Endothelial cell of umbilical vein (primary cell): ENCODE measurements at regions of chr2 and their contacts with region 1.

Region 1: DNA sequence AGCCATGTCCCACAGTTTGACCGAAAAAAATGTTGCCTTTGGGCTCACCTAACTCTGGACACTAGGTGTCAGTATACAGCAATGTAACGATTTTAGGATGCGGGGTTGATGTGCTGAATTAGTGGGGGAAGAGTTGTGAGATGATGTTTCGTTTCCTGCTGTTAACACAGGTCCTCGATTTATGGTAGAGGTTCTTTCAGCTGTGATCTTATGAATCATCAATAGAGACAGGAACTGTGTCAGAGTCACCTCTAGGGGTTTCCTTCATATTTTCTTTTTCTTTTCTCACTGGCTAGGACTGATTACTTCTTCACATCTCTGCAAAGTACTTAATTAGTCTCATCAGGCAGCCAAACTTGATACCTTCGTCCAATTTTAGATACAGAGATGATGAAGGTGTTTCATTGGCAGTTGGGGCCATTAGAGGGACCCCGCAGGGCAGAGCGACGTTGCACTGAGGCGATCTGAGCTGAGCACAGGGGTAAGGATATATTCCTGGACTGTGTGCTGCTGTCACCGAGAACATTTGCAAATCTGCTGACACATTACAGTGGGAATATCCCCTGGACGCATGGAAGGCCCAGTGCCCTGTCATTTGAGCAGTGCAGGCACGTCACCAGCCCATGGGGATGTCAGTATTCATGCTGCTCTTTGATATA is 10.2 kb upstream of the MMADHC start:
- DNase-seq: peak; percentile 87
- H3K4me3 ChIP-seq: peak overlapping the region in 1 of 3 experiments; percentile 30
- H3K27ac ChIP-seq: peak overlapping the region; percentile 81
- H3K4me1 ChIP-seq: peaks cover 7% of the 10 kb centered on the region
- H3K27me3 ChIP-seq: no peaks in the 10 kb centered on the region
- CTCF ChIP-seq: peak; percentile 60 to 91
- POLR2A ChIP-seq: no peak

Region 2: GRCh38 chr2:149271575-149271974 is 326.2 kb before region 1 on chr2:
- CTCF ChIA-PET with region 1: no interaction called
- POLR2A ChIA-PET with region 1: no interaction called
- dilution Hi-C with region 1: no loop called
- intact Hi-C with region 1: no loop called
- DNase-seq: no peak
- H3K4me3 ChIP-seq: no peak overlapping the region
- H3K27ac ChIP-seq: no peak overlapping the region
- H3K4me1 ChIP-seq: no peaks in the 10 kb centered on the region
- H3K27me3 ChIP-seq: no peaks in the 10 kb centered on the region
- CTCF ChIP-seq: no peak
- POLR2A ChIP-seq: no peak

Region 3: GRCh38 chr2:149715005-149715592 is 117.3 kb after region 1 on chr2:
- CTCF ChIA-PET with region 1: interaction called, 8 read pairs
- POLR2A ChIA-PET with region 1: no interaction called
- dilution Hi-C with region 1: no loop called
- intact Hi-C with region 1: loop called (anchors 1 kb)
- DNase-seq: peak; percentile 63
- H3K4me3 ChIP-seq: no peak overlapping the region
- H3K27ac ChIP-seq: no peak overlapping the region
- H3K4me1 ChIP-seq: no peaks in the 10 kb centered on the region
- H3K27me3 ChIP-seq: no peaks in the 10 kb centered on the region
- CTCF ChIP-seq: peak; percentile 71 to 76
- POLR2A ChIP-seq: no peak

Region 4: DNA sequence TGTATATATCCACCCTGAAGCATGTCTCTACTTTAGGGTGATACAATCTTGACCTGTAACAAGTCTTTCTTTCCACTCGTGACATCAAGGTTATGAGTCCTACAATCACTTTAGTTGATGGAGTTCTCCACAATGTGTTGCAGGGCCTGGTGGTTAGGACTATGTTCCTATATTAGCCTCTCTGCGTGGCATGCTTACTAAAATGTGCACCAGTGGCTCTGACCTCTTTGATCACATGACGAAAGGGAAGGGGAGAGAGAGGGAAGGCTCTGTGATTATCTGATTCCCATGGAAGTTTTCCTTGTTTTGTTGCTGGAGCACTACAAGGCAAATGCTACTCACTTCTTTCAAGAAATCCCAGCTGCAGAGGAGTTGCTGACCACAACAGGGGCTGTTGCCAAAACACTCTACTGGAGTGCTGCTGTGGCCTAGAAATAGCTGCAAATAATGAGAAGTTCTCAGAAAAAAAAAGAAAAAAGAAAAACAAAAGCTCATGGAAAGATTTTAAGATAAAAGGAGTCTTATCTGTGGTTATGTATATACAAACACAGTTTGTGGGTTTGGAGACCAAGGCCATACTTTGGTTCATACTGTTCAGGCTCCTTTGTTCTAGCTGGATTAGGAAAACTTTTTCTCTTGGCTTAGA is 262.6 kb after region 1 on chr2:
- CTCF ChIA-PET with region 1: interaction called, 3 read pairs
- POLR2A ChIA-PET with region 1: no interaction called
- dilution Hi-C with region 1: no loop called
- intact Hi-C with region 1: loop called (anchors 5 kb)
- DNase-seq: peak; percentile 75
- H3K4me3 ChIP-seq: no peak overlapping the region
- H3K27ac ChIP-seq: peak overlapping the region; percentile 11
- H3K4me1 ChIP-seq: peaks cover 36% of the 10 kb centered on the region
- H3K27me3 ChIP-seq: no peaks in the 10 kb centered on the region
- CTCF ChIP-seq: no peak
- POLR2A ChIP-seq: no peak

Region 5: GRCh38 chr2:150410809-150411208 is 813.0 kb after region 1 on chr2:
- CTCF ChIA-PET with region 1: no interaction called
- POLR2A ChIA-PET with region 1: no interaction called
- dilution Hi-C with region 1: no loop called
- intact Hi-C with region 1: loop called (anchors 2 kb)
- DNase-seq: peak; percentile 85
- H3K4me3 ChIP-seq: no peak overlapping the region
- H3K27ac ChIP-seq: peak overlapping the region; percentile 95
- H3K4me1 ChIP-seq: peaks cover 40% of the 10 kb centered on the region
- H3K27me3 ChIP-seq: no peaks in the 10 kb centered on the region
- CTCF ChIP-seq: no peak
- POLR2A ChIP-seq: peak; percentile 39

Region 6: GRCh38 chr2:150778828-150779227 is 1181.0 kb after region 1 on chr2:
- CTCF ChIA-PET with region 1: no interaction called
- POLR2A ChIA-PET with region 1: no interaction called
- dilution Hi-C with region 1: no loop called
- intact Hi-C with region 1: loop called (anchors 10 kb)
- DNase-seq: peak; percentile 80
- H3K4me3 ChIP-seq: no peak overlapping the region
- H3K27ac ChIP-seq: no peak overlapping the region
- H3K4me1 ChIP-seq: peaks cover 12% of the 10 kb centered on the region
- H3K27me3 ChIP-seq: no peaks in the 10 kb centered on the region
- CTCF ChIP-seq: no peak
- POLR2A ChIP-seq: no peak

Region 7: DNA sequence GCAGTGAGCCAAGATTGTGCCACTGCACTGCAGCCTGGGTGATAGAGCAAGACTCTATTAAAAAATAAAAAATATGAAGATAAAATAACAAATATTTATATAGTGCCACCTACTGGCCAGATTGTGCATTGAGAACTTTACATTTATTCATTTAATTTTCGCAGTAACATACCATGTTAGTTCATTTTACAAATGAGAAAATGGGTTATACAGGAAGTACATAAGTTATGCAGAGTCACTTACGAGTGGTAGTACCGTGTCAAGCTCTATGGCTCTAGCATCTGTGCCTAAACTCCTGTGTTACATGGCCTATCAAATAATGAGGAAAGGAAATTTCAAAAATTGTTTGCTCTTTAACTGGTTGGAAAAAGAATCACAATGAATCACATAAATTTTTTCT is 1839.8 kb after region 1 on chr2:
- CTCF ChIA-PET with region 1: interaction called, 5 read pairs
- POLR2A ChIA-PET with region 1: no interaction called
- dilution Hi-C with region 1: no loop called
- intact Hi-C with region 1: loop called (anchors 5 kb)
- DNase-seq: peak; percentile 58
- H3K4me3 ChIP-seq: no peak overlapping the region
- H3K27ac ChIP-seq: no peak overlapping the region
- H3K4me1 ChIP-seq: no peaks in the 10 kb centered on the region
- H3K27me3 ChIP-seq: no peaks in the 10 kb centered on the region
- CTCF ChIP-seq: peak; percentile 25 to 39
- POLR2A ChIP-seq: no peak